Activated B cell treated with CpG ODN at 0.5 μM for 24 hours (primary cell): ENCODE measurements at regions of chr1 and their contacts with region 1.

Region 1: GRCh38 chr1:116570358-116571200 is at the start of gene CD58:
- DNase-seq: peak; percentile 84
- ATAC-seq: peak; percentile 86
- H3K4me3 Mint-ChIP-seq: peak within 1 kb of the TSS; percentile 99
- H3K27ac Mint-ChIP-seq: peak within 1 kb of the TSS; percentile 95
- H3K4me1 Mint-ChIP-seq: peaks cover 80% of the 10 kb centered on the region
- H3K27me3 Mint-ChIP-seq: no peaks in the 10 kb centered on the region
- CTCF ChIP-seq: no peak
- total RNA-seq, gene CD58: 146 and 160 TPM in 2 replicates

Region 2: GRCh38 chr1:116390195-116390594 is 180.4 kb before region 1 on chr1:
- CTCF ChIA-PET with region 1: no interaction called
- POLR2A ChIA-PET with region 1: interaction called, 10 read pairs
- intact Hi-C with region 1: no loop called
- DNase-seq: no peak
- ATAC-seq: peak; percentile 62
- H3K4me3 Mint-ChIP-seq: no peak overlapping the region
- H3K27ac Mint-ChIP-seq: no peak overlapping the region
- H3K4me1 Mint-ChIP-seq: peaks cover 5% of the 10 kb centered on the region
- H3K27me3 Mint-ChIP-seq: no peaks in the 10 kb centered on the region
- CTCF ChIP-seq: no peak

Region 3: DNA sequence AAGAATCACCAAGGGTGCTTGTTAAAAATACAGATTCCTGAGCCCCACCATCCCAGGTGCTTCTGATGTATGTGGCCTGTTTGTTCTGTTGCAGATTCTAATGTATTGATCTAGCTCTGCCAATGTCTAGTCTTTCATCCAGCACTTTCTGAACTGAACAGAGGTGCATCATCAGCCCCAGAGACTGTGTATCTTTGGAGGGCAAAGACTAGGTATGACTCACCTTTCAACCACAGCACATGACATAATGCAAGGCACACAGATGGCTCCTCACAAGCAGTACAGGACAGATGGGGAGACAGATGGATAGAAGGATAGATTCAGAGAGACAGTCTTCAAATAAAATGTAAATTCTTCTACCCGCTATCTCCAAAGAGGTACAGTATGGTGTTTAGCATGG is 32.0 kb before region 1 on chr1:
- CTCF ChIA-PET with region 1: interaction called, 6 read pairs
- POLR2A ChIA-PET with region 1: interaction called, 52 read pairs
- intact Hi-C with region 1: loop called (anchors 1 kb)
- DNase-seq: no peak
- ATAC-seq: peak; percentile 80
- H3K4me3 Mint-ChIP-seq: peak overlapping the region; percentile 20
- H3K27ac Mint-ChIP-seq: peak overlapping the region; percentile 86
- H3K4me1 Mint-ChIP-seq: peaks cover 66% of the 10 kb centered on the region
- H3K27me3 Mint-ChIP-seq: no peaks in the 10 kb centered on the region
- CTCF ChIP-seq: no peak

Region 4: GRCh38 chr1:116628448-116628847 is 57.9 kb after region 1 on chr1:
- CTCF ChIA-PET with region 1: interaction called, 10 read pairs
- POLR2A ChIA-PET with region 1: interaction called, 4 read pairs
- intact Hi-C with region 1: loop called (anchors 1 kb)
- DNase-seq: no peak
- ATAC-seq: no peak
- H3K4me3 Mint-ChIP-seq: peak overlapping the region; percentile 60
- H3K27ac Mint-ChIP-seq: peak overlapping the region; percentile 86
- H3K4me1 Mint-ChIP-seq: peaks cover 27% of the 10 kb centered on the region
- H3K27me3 Mint-ChIP-seq: no peaks in the 10 kb centered on the region
- CTCF ChIP-seq: no peak

Region 5: DNA sequence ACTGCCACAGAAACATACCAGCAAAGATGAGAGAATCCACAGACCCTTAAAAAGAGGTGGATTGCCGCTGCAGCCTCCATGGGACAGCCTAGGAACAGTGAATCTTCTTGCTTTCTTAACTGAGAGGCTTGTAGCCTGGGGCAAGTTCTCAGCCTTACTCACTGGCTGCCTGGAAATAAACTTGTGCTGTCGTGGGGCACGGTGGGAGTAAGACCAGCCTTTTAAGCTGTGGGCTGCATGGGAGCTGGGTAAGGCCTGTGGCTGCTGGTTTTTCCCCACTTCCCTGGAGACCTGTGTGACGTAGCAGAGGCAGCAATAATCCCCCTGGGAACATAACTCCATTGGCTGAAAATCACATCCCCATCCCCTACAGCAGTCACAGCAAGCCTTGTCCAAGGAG is 214.4 kb after region 1 on chr1:
- CTCF ChIA-PET with region 1: no interaction called
- POLR2A ChIA-PET with region 1: no interaction called
- intact Hi-C with region 1: no loop called
- DNase-seq: no peak
- ATAC-seq: no peak
- H3K4me3 Mint-ChIP-seq: no peak overlapping the region
- H3K27ac Mint-ChIP-seq: no peak overlapping the region
- H3K4me1 Mint-ChIP-seq: no peaks in the 10 kb centered on the region
- H3K27me3 Mint-ChIP-seq: peaks cover 13% of the 10 kb centered on the region
- CTCF ChIP-seq: no peak

Region 6: DNA sequence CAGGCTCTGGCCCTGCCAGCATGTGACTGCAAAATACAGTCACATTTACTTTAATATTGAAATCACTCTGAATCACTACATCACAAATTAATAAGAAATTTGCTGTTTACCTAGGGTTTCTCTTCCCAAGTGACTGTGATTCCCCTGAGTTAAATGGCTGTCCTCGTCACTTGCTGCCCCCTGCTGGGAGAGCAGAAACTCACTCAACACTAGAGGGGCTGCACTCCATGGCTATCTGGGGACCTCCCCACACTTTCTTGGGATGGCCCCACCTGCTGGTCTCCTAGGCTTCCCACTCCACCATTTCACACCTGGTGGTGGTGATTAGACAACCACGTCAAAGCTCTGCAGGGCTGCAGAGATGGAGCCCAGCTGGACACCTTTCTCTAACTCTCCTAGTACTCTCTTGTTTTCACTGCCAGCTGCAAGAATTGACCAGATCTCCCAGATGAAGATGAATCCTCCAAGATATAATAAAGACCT is 247.0 kb after region 1 on chr1:
- CTCF ChIA-PET with region 1: interaction called, 14 read pairs
- POLR2A ChIA-PET with region 1: no interaction called
- intact Hi-C with region 1: loop called (anchors 1 kb)
- DNase-seq: peak; percentile 33
- ATAC-seq: peak; percentile 66
- H3K4me3 Mint-ChIP-seq: no peak overlapping the region
- H3K27ac Mint-ChIP-seq: no peak overlapping the region
- H3K4me1 Mint-ChIP-seq: peaks cover 9% of the 10 kb centered on the region
- H3K27me3 Mint-ChIP-seq: no peaks in the 10 kb centered on the region
- CTCF ChIP-seq: no peak

Region 7: GRCh38 chr1:117367047-117368018 is 796.8 kb after region 1 on chr1 and contains the start of gene MAN1A2:
- CTCF ChIA-PET with region 1: no interaction called
- POLR2A ChIA-PET with region 1: no interaction called
- intact Hi-C with region 1: loop called (anchors 10 kb)
- DNase-seq: peak; percentile 82
- ATAC-seq: peak; percentile 72
- H3K4me3 Mint-ChIP-seq: peak within 1 kb of the TSS; percentile 95
- H3K27ac Mint-ChIP-seq: peak within 1 kb of the TSS; percentile 91
- H3K4me1 Mint-ChIP-seq: peaks cover 68% of the 10 kb centered on the region
- H3K27me3 Mint-ChIP-seq: no peaks in the 10 kb centered on the region
- CTCF ChIP-seq: no peak
- total RNA-seq, gene MAN1A2: 43.3 and 46.0 TPM in 2 replicates